Activated CD4-positive, alpha-beta T cell treated with anti-CD3 and anti-CD28 coated beads, Interleukin-2, amount 10 ng/mL, durations not matched to agents 24 days and 14 days (primary cell): ENCODE measurements at regions of chr6 and their contacts with region 1.

Region 1: DNA sequence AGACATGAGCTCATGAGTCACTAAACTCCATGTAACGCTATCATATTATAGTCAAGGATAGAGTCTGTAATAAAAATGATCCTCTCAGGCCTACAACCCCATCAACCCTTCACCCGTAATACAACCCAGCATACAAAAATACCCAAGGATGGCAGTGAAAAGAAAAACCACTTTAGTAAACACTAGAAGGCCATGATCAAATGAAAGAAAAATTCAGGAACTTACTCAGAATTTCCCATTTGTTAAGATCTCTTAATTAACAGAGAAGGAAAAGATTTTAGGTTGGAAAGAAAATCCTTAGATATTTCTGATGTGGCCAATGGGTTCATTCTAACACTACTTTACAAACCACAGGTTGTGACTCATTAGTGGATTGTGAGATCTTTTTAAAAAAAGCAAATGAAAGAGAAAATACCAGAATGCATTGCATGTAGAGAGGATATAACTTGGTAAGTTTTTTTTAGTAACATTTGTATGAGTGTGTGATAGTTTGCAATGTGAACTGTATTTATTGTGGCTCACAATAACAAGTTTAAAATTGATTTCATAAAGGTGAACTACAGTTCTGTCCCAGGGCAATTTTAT is 8.0 kb upstream of the UBE2J1 start:
- DNase-seq: no peak
- H3K4me3 Mint-ChIP-seq: peak overlapping the region; percentile 39
- H3K27ac Mint-ChIP-seq: peak overlapping the region; percentile 72
- H3K4me1 Mint-ChIP-seq: peaks cover 48% of the 10 kb centered on the region
- H3K27me3 Mint-ChIP-seq: no peaks in the 10 kb centered on the region

Region 2: DNA sequence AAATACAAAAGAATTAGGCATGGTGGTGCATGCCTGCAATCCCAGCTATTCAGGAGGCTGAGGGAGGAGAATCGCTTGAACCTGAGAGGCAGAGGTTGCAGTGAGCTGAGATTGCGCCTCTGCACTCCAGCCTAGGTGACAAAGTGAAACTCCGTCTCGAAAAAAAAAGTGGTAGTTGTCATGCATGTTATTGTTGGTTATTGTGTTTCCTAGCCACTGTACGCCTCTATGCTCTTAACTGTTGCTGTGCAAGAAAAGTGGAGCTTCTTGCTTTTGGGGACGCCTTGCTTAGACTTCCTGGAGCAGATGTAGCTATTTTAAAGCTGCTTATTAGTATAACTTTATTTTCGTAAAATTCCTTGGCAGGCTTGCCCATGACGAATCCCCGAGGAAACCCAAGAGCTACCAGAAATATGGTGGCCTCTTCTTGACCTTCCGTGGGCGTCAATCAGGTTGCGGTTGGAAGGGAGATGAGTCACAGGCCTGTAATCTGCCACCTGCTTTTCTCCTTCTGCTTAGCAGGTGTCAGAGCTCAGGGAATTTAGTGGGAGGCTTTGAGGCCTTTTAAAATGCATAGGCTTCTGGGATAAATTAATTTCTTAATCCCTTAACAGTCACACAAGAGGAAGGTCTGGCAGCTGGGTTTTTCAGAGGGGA is 62.7 kb before region 1 on chr6:
- intact Hi-C with region 1: loop called (anchors 2 kb)
- DNase-seq: peak; percentile 90
- H3K4me3 Mint-ChIP-seq: peak overlapping the region; percentile 56
- H3K27ac Mint-ChIP-seq: peak overlapping the region; percentile 86
- H3K4me1 Mint-ChIP-seq: peaks cover 22% of the 10 kb centered on the region
- H3K27me3 Mint-ChIP-seq: no peaks in the 10 kb centered on the region

Region 3: GRCh38 chr6:89412071-89413005 is 51.8 kb after region 1 on chr6 and contains the start of gene RRAGD:
- intact Hi-C with region 1: loop called (anchors 2 kb)
- DNase-seq: peak; percentile 89
- H3K4me3 Mint-ChIP-seq: peak within 1 kb of the TSS; percentile 97
- H3K27ac Mint-ChIP-seq: peak within 1 kb of the TSS; percentile 95
- H3K4me1 Mint-ChIP-seq: peaks cover 17% of the 10 kb centered on the region
- H3K27me3 Mint-ChIP-seq: peaks cover 51% of the 10 kb centered on the region
- total RNA-seq, gene RRAGD: 10.6 and 10.9 TPM in 2 replicates

Region 4: DNA sequence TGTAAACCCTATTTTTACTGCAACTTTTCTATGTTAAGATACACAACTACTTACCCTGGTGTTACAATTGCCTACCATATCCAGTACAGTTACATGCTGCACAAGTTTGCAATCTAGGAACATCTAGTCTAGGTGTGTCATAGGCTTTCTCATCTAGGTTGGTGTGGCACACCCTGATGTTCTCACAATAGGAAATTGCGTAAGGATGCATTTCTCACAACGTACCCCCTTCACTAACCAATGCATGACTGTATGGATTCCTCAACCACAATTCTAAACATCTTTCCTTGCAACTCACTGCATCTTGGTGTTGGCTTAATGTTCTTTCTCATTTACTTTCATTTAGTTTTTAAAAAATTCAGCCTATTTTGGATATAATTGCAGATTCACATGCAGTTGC is 565.3 kb after region 1 on chr6:
- intact Hi-C with region 1: no loop called
- DNase-seq: no peak
- H3K4me3 Mint-ChIP-seq: no peak overlapping the region
- H3K27ac Mint-ChIP-seq: no peak overlapping the region
- H3K4me1 Mint-ChIP-seq: peaks cover 33% of the 10 kb centered on the region
- H3K27me3 Mint-ChIP-seq: no peaks in the 10 kb centered on the region